HEK293 (cell line): ENCODE measurements at regions of chr11 and their contacts with region 1.

Region 1: GRCh38 chr11:118171269-118172062 is 5.0 kb downstream of the SCN2B start:
- H3K4me3 ChIP-seq: no peak overlapping the region
- H3K27ac ChIP-seq: no peak overlapping the region
- H3K4me1 ChIP-seq: no peaks in the 10 kb centered on the region
- CTCF ChIP-seq: peak; percentile 80

Region 2: GRCh38 chr11:118145285-118146227 is 25.9 kb before region 1 on chr11:
- CTCF ChIA-PET with region 1: interaction called, 128 read pairs
- POLR2A ChIA-PET with region 1: interaction called, 4 read pairs
- H3K4me3 ChIP-seq: peak overlapping the region; percentile 55
- H3K27ac ChIP-seq: no peak overlapping the region; the same call in 1 of the 2 replicates
- H3K4me1 ChIP-seq: no peaks in the 10 kb centered on the region
- CTCF ChIP-seq: peak; percentile 82

Region 3: GRCh38 chr11:118152552-118153471 is 18.7 kb before region 1 on chr11 and contains the start of gene SCN4B:
- CTCF ChIA-PET with region 1: interaction called, 128 read pairs
- POLR2A ChIA-PET with region 1: interaction called, 7 read pairs
- H3K4me3 ChIP-seq: peak within 1 kb of the TSS; percentile 47
- H3K27ac ChIP-seq: no peak within 1 kb of the TSS; the same call in 1 of the 2 replicates
- H3K4me1 ChIP-seq: no peaks in the 10 kb centered on the region
- CTCF ChIP-seq: no peak